ENCODE measurements at regions of chr19 and their contacts with region 1.

Region 1: DNA sequence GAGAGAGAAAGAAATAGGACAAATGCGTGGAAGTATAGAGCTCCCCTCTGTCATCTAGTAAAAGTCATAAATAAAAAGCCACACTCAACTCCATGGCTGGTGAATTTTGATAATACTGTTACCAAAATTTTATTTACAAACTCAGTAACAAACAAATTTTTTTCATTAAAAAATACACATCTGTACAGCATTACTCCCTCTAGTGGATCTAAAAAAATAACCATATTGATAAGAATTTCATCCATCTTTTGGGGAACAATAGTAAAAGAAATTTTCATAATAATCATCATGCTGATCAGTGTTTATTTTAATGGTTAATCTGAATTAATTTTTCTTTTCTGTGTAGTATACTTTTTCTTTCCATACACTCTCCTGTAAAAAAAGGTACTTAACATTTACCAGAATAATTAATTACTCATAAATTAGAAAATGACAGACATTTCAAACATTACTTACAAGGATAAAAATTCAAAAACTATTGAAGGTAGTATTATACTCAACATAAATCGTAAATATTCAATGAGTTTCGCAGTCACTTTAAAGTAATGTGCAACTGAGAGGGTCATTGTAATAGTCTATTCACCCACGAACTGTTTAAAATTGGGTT is 173.5 kb upstream of the LSM14A start:
- DNase-seq: no peak
- H3K4me3 ChIP-seq: no peak overlapping the region
- CTCF ChIP-seq: no peak

Region 2: GRCh38 chr19:33785795-33786194 is 213.0 kb before region 1 on chr19:
- CTCF ChIA-PET with region 1: interaction called, 123 read pairs
- POLR2A ChIA-PET with region 1: no interaction called
- DNase-seq: no peak
- H3K4me3 ChIP-seq: no peak overlapping the region
- CTCF ChIP-seq: no peak

Region 3: DNA sequence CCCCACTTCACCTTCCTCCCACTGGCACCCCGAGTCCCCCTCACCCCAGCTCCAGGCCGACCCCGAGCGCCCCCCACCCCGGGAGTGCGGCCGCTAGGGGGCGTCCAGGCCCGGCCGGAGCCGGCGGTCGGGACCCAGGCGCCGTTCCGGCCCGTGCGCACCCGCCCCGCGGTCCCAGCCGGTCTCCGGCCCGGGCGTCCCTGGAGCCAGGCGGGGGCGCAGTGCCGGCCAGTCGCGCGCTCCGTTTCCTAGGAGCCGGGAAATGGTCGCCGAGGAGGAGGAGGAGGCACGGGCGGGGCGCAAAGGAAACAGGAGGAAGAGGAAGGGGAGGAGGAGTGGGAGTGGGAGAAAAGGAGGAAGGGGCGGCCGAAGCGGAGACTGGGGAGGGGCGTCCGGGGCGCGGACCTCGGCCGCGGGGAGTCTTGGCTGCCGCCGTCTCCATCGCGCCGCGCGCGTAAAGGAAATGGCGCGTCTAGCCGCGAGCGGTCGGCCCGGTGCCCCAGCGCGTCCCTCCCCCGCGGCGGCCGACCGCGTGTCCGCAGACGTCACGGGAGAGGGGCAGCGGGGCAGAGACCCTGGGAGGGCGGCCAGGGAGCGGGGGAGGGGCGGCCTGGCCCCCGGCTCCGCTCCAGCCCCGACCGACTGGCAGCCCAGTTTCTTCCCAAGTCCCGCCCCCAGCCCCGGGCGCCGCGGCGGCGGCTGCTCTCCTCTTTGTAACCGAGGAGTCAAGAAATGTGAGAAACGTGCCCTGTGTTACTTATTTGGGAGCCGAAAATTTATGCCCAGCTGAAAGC is 203.3 kb before region 1 on chr19:
- CTCF ChIA-PET with region 1: interaction called, 24 read pairs
- POLR2A ChIA-PET with region 1: no interaction called
- DNase-seq: no peak
- H3K4me3 ChIP-seq: peak overlapping the region; percentile 74
- CTCF ChIP-seq: peak; percentile 68

Region 4: GRCh38 chr19:33883859-33884519 is 114.9 kb before region 1 on chr19:
- CTCF ChIA-PET with region 1: no interaction called
- POLR2A ChIA-PET with region 1: no interaction called
- DNase-seq: no peak
- H3K4me3 ChIP-seq: no peak overlapping the region
- CTCF ChIP-seq: no peak

Region 5: DNA sequence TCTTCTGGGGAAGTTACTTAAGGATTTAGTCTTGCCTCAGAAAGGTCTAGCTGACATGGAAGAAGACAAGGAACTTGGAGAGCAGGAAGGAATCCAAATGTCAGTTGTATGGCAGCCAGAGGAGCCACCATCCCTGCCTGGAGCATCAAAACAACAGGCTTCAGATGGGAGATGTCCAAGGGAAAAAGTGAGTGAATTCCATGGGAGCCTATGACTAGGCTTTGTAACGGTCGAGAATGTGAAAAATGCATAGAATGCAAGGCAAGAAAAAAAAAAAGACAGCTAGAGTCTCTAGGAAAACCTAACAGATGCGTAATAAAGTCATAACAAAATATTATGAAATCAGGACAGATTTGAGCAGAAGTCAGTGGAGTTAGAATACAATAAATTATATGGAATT is 10.3 kb before region 1 on chr19:
- CTCF ChIA-PET with region 1: interaction called, 21 read pairs
- POLR2A ChIA-PET with region 1: no interaction called
- DNase-seq: no peak
- H3K4me3 ChIP-seq: no peak overlapping the region
- CTCF ChIP-seq: no peak

Region 6: DNA sequence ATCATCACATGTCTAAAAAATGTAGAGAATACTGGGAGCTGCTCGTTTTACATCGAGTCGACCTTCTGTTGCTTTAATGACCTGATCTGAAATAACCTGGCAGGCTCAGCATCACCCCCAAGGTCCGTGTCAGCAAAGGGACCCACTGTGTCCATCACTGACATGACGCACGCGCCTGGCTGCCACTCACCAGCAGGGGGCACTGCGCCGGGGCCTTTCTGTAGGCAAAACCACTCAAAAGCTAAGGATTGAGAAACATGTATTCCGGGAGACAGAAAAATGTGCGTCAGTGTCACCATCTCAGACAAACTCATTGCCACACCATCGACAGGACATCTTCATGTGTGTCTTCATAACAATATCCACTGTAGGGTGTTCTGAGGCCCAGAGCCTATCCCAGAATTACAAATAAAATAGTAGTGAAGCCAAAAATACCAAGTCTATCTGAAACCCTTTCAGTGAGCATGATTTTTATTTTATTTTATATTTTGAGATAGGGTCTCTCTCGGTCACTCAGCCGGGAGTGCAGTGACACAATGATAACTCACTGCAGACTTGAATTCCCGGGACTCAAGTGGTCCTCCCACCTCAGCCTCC is 43.2 kb after region 1 on chr19:
- CTCF ChIA-PET with region 1: interaction called, 12 read pairs
- POLR2A ChIA-PET with region 1: no interaction called
- DNase-seq: no peak
- H3K4me3 ChIP-seq: no peak overlapping the region
- CTCF ChIP-seq: peak; percentile 84

Measured in AG04449 (cell line).